GM10248 (cell line): ENCODE measurements at regions of chr1 and their contacts with region 1.

Region 1: GRCh38 chr1:904310-904950 is 19.3 kb upstream of the SAMD11 start:
- DNase-seq: peak; percentile 91
- CTCF ChIP-seq: peak; percentile 95

Region 2: GRCh38 chr1:916173-917075 is 12.0 kb after region 1 on chr1:
- CTCF ChIA-PET with region 1: interaction called, 14 read pairs
- POLR2A ChIA-PET with region 1: no interaction called
- DNase-seq: no peak
- CTCF ChIP-seq: no peak

Region 3: GRCh38 chr1:931380-932172 is 27.1 kb after region 1 on chr1:
- CTCF ChIA-PET with region 1: interaction called, 34 read pairs
- POLR2A ChIA-PET with region 1: no interaction called
- DNase-seq: no peak
- CTCF ChIP-seq: no peak

Region 4: GRCh38 chr1:941588-942383 is 37.4 kb after region 1 on chr1:
- CTCF ChIA-PET with region 1: interaction called, 34 read pairs
- POLR2A ChIA-PET with region 1: no interaction called
- DNase-seq: peak; percentile 61
- CTCF ChIP-seq: no peak

Region 5: GRCh38 chr1:958823-959729 is 54.6 kb after region 1 on chr1 and contains the start of gene NOC2L:
- CTCF ChIA-PET with region 1: no interaction called
- POLR2A ChIA-PET with region 1: no interaction called
- DNase-seq: peak; percentile 95
- CTCF ChIP-seq: no peak